Activated T-helper 2 cell treated with anti-CD3 and anti-CD28 coated beads, Interferon-gamma antibody, Interleukin-2, Interleukin-4, amounts not matched to agents 10 μg/mL and 5 μg/mL and 100 μg/mL, durations not matched to agents 14 hours and 24 hours and 36 hours (primary cell): ENCODE measurements at regions of chr1 and their contacts with region 1.

Region 1: DNA sequence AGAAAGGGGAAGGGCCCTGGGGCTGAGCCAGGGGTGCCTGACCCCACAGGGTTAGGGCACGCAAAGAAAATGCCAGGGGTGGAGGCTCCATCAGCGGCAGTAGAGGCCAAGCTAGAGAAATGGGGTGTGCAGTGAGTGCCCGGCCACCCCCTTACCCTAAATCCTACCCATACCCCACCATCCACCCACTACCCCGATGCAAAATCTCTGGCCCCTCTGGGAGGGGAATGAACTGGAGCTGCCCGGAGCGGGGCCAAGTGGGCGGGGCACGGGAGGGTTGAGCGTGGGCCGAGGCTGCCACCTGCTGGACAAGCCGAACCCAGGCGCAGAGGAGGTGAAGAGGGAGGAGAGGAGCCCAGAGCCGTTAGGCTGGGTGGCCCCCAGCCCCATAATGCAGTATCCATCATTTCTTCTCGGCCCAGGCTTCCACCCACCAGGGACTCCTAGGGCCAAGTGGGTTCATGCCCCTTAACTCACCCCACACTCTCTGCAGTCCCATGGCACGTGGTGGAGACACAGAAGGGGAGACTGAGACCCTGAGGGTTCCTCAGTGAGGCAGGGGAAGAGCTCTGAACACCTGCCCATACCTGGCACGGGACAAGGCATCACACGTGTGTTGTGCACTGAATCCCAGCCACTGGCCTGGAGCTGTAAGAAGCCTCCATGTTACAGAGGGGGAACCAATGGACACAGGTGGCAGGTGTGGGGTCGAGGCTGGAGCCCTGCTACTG is 1.4 kb upstream of the C1QC start:
- DNase-seq: peak; percentile 44
- H3K4me3 Mint-ChIP-seq: no peak overlapping the region
- H3K27ac Mint-ChIP-seq: no peak overlapping the region
- H3K4me1 Mint-ChIP-seq: no peaks in the 10 kb centered on the region
- H3K27me3 Mint-ChIP-seq: no peaks in the 10 kb centered on the region

Region 2: DNA sequence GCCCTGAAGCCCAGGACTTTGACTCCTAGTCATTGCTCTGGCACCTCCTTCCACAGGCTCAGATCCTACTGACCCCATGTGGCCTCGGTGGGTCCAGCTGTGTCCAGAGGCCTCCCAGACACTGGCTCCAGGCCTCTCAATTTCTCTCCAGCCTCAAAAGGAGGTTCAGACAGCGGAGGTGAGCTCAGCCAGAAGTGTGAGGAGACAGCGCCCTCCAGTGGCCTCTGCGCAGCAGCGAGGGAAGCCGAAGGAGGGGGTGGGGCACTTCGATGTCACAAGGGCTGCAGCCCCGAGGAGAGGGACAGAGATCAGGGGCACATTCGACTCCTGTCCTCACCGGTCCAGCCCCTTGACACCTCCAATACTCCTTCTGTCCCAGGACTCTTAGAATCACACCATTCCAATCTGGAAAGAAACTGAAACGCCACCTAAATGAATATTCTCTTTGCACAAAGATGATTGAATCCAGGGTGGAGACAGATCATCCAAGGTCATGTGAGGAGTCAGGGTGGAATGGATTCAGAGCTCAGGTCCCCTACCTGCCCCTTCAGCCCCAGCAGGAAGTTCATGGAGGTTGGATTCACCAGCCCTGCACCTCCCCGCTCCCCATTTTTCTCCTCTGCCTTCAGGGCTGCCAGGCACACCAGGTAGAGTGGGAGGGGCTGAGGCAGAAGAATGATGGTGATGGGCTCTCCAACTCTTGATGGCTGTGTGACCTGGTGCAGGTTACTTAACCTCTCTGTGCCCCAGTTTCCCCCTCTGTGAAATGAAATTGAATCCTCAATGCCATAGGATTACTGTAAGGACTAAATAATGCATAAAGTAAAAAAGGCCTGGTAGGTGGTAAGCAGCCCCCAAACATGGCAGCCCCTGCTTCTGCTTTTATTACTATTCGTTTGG is 225.3 kb before region 1 on chr1:
- intact Hi-C with region 1: loop called (anchors 1 kb)
- DNase-seq: peak; percentile 62
- H3K4me3 Mint-ChIP-seq: no peak overlapping the region
- H3K27ac Mint-ChIP-seq: no peak overlapping the region
- H3K4me1 Mint-ChIP-seq: no peaks in the 10 kb centered on the region
- H3K27me3 Mint-ChIP-seq: peaks cover 18% of the 10 kb centered on the region

Region 3: DNA sequence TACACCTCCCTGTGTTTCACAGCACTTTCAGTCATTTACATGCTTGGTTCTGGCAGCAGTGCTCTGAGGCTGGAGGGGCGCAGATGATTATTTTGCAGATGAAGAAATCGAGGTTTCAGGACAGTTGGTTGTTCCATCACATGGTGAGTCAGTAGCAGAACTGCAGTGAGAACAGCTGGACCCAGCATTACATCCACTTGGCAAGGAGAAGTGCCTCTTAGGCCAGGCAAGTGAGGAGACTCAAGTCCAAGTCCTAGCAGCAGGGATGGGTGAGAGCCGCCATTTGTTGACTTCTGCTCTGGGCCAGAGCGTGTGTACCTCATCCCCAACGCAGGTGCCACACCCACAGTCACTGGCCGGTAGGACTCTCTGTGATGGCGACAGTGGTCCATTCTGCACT is 105.6 kb before region 1 on chr1:
- intact Hi-C with region 1: no loop called
- DNase-seq: no peak
- H3K4me3 Mint-ChIP-seq: no peak overlapping the region
- H3K27ac Mint-ChIP-seq: no peak overlapping the region
- H3K4me1 Mint-ChIP-seq: peaks cover 7% of the 10 kb centered on the region
- H3K27me3 Mint-ChIP-seq: no peaks in the 10 kb centered on the region

Region 4: DNA sequence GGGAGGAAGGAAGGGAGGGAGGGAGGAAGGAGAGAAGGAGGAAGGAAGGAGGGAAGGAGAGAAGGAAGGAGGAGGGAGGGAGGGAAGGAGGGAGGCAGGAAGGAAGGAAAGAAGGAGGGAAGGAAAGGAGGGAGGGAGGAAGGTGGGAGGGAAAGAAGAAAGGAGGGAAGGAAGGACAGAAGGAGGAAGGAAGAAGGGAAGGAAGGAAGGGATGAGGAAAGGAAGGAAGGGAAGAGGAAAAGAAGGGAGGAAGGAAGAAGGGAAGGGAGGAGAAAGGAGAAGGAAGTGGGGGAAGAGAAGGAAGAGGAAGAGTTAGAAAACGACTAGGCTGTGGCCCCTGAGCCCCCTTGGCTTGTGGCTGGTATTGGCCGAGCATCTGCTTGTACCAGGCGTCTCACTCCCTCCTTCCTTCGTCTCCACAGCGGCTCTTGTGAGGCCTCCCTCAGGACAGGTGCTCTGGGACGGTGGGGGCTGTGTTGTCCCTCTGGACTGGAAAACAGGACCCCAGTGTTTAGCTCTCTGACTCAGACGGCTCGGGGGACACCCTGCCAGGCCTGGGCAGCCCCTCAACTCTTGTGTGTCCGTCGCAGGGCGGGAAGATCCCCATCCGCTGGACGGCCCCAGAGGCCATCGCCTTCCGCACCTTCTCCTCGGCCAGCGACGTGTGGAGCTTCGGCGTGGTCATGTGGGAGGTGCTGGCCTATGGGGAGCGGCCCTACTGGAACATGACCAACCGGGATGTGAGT is 41.8 kb before region 1 on chr1:
- intact Hi-C with region 1: no loop called
- DNase-seq: no peak
- H3K4me3 Mint-ChIP-seq: no peak overlapping the region
- H3K27ac Mint-ChIP-seq: no peak overlapping the region
- H3K4me1 Mint-ChIP-seq: no peaks in the 10 kb centered on the region
- H3K27me3 Mint-ChIP-seq: no peaks in the 10 kb centered on the region